ENCODE measurements at regions of chr9 and their contacts with region 1.

Region 1: DNA sequence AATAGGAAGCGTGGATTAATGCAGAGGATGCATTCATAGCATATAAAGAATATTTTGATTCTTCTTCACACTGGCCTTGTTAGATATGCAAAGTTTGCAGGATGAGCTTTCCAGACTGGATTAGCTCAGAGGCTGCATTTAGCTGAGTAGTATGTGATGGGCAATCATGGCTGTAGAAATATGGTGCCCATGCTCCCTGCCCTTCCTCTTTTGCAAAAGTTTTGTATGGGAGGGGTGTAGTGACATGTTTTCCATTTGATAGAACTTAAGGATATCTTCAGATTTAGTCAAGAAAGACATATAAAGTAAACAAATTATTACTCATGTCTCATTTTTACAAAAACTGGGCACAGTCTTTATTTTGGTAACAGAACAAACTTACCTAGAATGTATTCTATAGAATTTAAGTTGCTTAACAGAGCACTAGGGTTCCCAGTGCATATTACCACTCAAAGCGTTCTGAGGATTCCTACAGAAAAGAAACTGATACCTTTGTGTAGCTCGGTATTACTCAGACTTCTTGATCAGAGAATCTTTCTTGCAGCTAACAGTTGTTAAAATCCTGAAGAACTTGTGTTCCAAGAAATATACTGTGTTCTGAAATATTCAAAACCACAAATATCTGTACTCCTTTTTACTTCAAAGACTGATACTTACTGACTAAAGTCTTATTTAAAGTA is 9.8 kb downstream of the GTF3C4 start:
- DNase-seq: no peak
- ATAC-seq: no peak

Region 2: DNA sequence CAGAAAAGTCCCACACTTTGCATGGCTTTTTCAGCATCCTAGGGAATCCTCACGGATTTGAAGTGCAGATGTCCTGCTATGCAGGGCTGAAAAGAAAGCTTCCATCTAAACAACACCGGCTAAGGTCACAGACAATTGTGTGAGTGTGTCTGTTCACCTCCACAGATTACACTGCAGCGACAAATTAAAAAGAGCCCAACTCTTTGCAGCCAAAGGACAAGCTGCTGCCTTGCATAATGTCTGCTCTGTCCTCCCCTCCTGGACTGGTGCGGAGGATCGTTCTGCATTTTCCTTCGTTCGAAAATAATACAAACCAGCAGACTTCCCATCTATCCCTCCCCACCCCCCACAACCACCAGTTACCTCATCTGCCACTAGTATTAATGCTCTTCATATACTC is 769.5 kb before region 1 on chr9:
- intact Hi-C with region 1: no loop called
- DNase-seq: no peak
- ATAC-seq: no peak

Region 3: DNA sequence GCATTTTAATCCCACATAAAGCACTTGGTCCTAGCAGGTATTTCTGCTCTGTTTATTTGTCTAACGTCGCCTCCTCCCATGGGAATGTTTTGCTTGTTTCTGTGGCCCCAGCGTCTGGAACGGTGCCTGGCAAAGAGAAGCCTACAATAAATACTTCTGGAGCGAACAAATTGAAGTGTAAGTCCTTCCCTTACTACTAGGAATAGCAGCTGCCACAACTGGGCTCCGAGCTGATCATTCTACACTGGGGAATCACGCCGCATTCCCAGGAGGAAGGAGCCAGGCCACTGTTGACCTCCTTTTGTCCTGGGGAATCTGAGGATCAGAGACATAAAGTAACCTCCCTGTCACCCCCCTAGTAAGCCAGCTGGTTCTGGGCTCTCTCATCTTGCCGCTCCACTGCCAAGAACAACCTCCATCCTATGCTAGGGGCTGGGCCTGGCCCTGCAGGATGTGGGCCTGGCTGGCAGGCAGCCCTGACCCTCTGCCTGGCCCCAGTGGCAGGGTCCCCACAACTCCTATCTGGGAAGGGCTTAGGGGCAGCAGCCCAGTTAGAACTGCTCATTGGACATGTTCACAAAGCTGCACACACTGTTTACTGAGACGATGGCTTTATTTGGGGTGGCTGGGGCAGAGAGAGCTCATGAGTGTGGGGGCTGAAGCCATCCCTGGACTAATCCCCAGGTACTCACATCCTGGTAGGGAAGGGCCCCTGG is 72.9 kb after region 1 on chr9:
- intact Hi-C with region 1: loop called in 1 of 2 experiments (anchors 10 kb)
- DNase-seq: no peak
- ATAC-seq: no peak